Pancreas (tissue), 10 donors: ENCODE measurements at regions of chr11 and their contacts with region 1.

Region 1: DNA sequence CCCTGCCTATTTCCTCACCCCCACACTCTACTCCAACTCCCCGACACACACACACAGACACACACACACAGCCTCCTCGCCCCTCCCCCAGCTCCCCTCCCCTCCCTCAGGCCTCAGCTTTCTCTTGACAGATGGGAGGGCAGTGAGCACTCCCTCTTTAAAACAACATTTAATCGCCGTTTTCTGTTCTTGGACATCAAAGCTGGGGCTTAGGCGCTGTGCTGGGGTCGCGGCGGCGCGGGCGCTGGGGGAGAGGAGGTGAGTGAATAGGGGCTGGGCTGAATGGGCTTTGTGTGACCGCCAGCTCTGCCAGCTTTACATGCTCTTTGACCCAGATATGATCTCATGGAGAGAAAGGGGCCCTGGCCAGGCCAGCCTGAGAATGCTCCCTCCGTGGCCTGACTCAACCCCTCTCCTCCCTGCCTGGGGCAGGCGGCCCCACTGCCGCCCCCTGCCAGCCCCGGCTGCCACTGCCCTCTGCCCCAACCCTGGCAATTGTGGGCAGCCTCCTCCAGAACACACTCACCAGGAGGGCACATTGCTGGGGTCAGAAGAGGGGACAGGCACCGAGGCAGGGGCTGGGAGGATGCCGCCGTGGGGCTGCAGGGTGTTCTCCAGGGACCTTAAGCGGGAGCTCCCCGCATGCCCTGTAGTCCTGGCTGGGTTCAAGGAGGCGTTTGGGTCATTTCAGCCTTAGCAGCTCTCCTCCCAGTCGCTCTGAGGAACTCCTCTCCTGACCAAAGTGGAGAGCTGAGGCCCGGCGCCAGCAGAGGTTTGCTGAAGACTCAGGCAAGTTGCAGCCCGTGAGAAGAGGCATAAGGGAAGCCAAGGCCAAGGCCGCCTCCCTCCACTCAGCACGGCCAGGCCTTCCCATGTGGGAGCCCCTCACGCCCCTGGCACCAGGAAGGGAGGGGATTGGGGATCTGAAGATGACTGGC is 38.3 kb upstream of the NNMT start:
- DNase-seq: peak in 1 of 6 donors; percentile 57
- ATAC-seq: peak in 3 of 4 donors; percentile 14 to 33 (median 15)
- H3K4me3 ChIP-seq: no peak overlapping the region
- H3K27ac ChIP-seq: no peak overlapping the region
- H3K4me1 ChIP-seq: no peaks in the 10 kb centered on the region
- H3K27me3 ChIP-seq: no peaks in the 10 kb centered on the region
- CTCF ChIP-seq: no peak

Region 2: GRCh38 chr11:114036156-114036811 is 221.6 kb before region 1 on chr11:
- intact Hi-C with region 1: loop called in 2 of 3 experiments (anchors 2 to 10 kb)
- DNase-seq: peak; percentile 75 to 95 (median 91)
- ATAC-seq: peak; percentile 94 to 99 (median 98)
- H3K4me3 ChIP-seq: peak overlapping the region in 3 of 4 donors; percentile 9 to 46 (median 28)
- H3K27ac ChIP-seq: peak overlapping the region in 3 of 4 donors; percentile 12 to 33 (median 23)
- H3K4me1 ChIP-seq: peaks cover 0 to 4% (median 3%) of the 10 kb centered on the region in 3 donors
- H3K27me3 ChIP-seq: no peaks in the 10 kb centered on the region
- CTCF ChIP-seq: peak; percentile 83 to 92 (median 88)

Region 3: DNA sequence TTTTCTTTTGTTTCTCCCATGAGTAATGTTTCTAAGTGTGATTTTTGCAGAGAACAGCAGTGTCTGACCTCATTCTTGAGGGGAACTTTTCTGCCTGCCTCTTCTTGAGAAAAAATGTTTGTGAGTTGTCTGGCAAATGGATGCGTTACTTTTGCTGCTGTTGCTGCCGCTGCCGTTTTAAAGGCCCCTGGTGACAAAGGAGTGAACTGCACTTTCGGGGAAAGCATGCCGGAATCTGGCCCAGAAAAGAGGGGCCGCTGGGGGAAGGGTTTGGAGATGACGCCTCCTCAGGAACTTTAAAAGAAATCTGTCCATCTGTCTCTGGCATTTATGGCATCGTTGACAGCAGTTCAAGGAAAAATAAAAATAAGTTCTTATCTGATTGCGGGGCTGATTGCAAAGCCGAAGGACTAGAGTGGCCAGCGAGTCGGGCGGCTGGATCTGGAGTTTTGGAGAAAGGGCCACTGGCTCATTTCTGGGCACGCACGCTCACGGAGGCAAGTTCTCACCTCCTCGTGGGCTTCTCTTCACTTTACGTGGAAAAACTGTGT is 181.9 kb before region 1 on chr11:
- intact Hi-C with region 1: no loop called
- DNase-seq: peak in 1 of 6 donors; percentile 38
- ATAC-seq: no peak
- H3K4me3 ChIP-seq: no peak overlapping the region
- H3K27ac ChIP-seq: no peak overlapping the region
- H3K4me1 ChIP-seq: peaks cover 40 to 48% (median 42%) of the 10 kb centered on the region in 3 donors
- H3K27me3 ChIP-seq: no peaks in the 10 kb centered on the region
- CTCF ChIP-seq: peak; percentile 17 to 43 (median 26)

Region 4: DNA sequence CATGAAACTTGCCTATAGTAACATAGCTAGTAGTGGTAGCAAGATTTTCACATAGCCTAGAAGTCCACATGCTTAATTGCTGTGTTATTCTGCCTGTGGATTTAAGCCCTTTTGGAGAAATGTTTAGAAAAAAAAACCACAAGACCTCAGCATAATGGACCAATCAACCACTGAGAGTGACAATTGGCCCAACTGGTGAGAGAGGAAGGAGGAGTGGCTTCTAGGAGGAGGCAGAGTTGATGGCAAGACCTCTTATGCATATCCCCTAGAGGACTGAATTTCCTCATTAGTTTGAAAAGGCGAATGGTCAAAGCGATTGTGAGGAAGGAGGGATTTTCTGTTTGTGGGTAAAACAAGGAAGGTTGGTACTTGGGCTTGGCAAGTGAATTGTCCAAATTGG is 68.9 kb after region 1 on chr11:
- intact Hi-C with region 1: no loop called
- DNase-seq: no peak
- ATAC-seq: no peak
- H3K4me3 ChIP-seq: no peak overlapping the region
- H3K27ac ChIP-seq: no peak overlapping the region
- H3K4me1 ChIP-seq: no peaks in the 10 kb centered on the region
- H3K27me3 ChIP-seq: no peaks in the 10 kb centered on the region
- CTCF ChIP-seq: no peak

Region 5: DNA sequence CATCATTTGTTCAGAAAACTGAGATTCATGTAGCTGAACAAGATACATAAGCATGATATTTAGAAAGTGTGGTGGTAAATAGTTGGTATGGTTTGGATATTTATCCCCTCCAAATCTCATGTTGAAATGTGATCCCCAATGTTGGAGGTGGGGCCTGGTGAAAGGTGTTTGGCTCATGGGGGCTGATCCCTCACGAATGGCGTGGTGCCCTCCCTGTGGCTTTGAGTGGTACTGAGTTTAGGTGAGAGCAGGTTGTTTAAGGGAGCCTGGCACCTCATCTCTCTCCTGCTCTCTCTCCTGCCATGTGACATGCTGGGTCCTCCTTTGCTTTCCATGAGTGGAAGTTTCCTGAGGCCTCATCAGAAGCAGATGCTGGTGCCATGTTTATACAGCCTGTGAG is 253.6 kb after region 1 on chr11:
- intact Hi-C with region 1: no loop called
- DNase-seq: no peak
- ATAC-seq: no peak
- H3K4me3 ChIP-seq: no peak overlapping the region
- H3K27ac ChIP-seq: no peak overlapping the region
- H3K4me1 ChIP-seq: no peaks in the 10 kb centered on the region
- H3K27me3 ChIP-seq: no peaks in the 10 kb centered on the region
- CTCF ChIP-seq: no peak